B cell (primary cell): ENCODE measurements at regions of chr3 and their contacts with region 1.

Region 1: DNA sequence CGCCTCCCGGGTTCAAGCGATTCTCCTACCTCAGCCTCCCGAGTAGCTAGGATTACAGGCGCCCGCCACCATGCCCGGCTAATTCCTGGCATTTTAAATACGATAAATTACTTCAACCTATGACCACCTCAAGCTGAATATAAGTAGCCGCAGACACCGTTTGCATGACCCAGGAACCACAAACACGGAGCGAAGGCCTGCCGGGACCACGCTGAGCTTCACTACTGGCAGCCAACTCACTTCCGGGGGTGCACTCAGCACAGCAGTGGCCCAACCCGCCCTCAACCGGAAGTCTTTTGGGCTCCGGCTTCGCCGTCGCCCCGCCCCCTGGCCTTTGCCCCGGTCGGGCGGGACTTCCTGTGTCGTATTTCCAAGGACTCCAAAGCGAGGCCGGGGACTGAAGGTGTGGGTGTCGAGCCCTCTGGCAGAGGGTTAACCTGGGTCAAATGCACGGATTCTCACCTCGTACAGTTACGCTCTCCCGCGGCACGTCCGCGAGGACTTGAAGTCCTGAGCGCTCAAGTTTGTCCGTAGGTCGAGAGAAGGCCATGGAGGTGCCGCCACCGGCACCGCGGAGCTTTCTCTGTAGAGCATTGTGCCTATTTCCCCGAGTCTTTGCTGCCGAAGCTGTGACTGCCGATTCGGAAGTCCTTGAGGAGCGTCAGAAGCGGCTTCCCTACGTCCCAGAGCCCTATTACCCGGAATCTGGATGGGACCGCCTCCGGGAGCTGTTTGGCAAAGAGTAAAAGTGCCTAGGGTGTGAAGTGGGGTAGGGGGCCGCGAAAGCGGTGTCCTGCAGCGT is at the start of gene TIMMDC1:
- DNase-seq: peak; percentile 97
- ATAC-seq: peak; percentile 99
- H3K4me3 ChIP-seq: peak within 1 kb of the TSS; percentile 86 to 98 (median 94)
- H3K4me3 Mint-ChIP-seq: peak within 1 kb of the TSS; percentile 100
- H3K27ac ChIP-seq: peak within 1 kb of the TSS; percentile 82 to 91
- H3K27ac Mint-ChIP-seq: peak within 1 kb of the TSS; percentile 98
- H3K4me1 ChIP-seq: peaks cover 16 to 18% of the 10 kb centered on the region in 2 donors
- H3K4me1 Mint-ChIP-seq: peaks cover 26% of the 10 kb centered on the region
- H3K27me3 ChIP-seq: no peaks in the 10 kb centered on the region
- H3K27me3 Mint-ChIP-seq: no peaks in the 10 kb centered on the region
- CTCF ChIP-seq: no peak
- total RNA-seq, gene TIMMDC1: 58.5 and 70.9 TPM in 2 replicates

Region 2: GRCh38 chr3:119145500-119146191 is 352.7 kb before region 1 on chr3 and contains the start of gene TEX55:
- CTCF ChIA-PET with region 1: no interaction called
- POLR2A ChIA-PET with region 1: no interaction called
- intact Hi-C with region 1: no loop called
- DNase-seq: peak; percentile 18
- ATAC-seq: no peak
- H3K4me3 ChIP-seq: no peak within 1 kb of the TSS
- H3K4me3 Mint-ChIP-seq: no peak within 1 kb of the TSS
- H3K27ac ChIP-seq: no peak within 1 kb of the TSS
- H3K27ac Mint-ChIP-seq: no peak within 1 kb of the TSS
- H3K4me1 ChIP-seq: no peaks in the 10 kb centered on the region
- H3K4me1 Mint-ChIP-seq: no peaks in the 10 kb centered on the region
- H3K27me3 ChIP-seq: no peaks in the 10 kb centered on the region
- H3K27me3 Mint-ChIP-seq: no peaks in the 10 kb centered on the region
- CTCF ChIP-seq: peak; percentile 35
- total RNA-seq, gene TEX55: not detected in 2 replicates

Region 3: DNA sequence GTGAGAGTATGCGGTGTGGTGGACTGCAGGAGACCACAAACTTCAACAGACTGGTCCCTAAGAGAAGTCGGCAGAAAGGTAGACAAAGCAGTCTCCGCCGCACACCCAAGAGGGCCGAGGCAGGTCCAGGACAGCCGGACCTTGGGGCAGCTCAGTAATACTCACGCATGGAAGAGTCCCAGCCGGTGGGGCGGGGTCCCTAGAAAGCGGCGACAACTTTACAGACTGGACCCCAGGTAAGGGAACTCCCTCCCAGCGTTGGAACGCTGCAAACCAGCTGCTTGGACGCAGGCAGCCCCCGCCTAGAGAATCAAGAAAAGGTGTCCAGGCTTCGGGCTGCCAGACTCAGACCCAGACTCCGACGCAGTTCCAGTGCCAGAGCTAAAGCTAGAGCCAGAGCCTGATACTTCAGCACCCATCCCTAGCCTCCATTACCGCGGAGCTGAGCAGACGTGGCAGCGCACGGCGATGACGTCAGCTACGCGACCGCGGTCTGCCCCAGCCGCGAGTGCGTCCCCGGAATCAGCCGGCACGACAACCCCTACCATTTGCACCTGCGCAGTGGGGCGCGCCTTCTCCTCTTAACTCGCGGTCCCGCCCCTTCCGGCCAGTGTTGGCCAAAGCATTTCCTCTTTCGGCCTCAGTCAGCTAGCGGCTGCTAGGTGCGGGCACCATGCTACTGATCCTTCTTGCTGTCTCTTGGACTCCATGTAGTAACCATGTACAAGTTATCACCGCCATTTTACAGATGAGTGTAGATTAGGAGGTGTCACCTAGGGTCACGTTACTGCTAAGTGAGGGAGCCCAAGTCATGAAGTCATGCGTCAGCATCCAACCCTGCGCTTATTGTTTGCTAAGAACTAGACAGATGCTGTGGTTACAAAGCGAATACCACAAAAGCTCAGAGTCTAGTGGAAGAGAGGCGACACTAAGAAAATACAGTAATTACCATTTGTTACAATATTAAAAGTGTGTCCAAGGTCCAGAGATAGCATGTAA is 34.9 kb before region 1 on chr3 and contains the start of gene TMEM39A:
- CTCF ChIA-PET with region 1: interaction called, 16 read pairs
- POLR2A ChIA-PET with region 1: interaction called, 14 read pairs
- intact Hi-C with region 1: loop called (anchors 1 kb)
- DNase-seq: peak; percentile 99
- ATAC-seq: peak; percentile 87
- H3K4me3 ChIP-seq: peak within 1 kb of the TSS; percentile 76 to 99 (median 85)
- H3K4me3 Mint-ChIP-seq: peak within 1 kb of the TSS; percentile 96
- H3K27ac ChIP-seq: peak within 1 kb of the TSS; percentile 68 to 88
- H3K27ac Mint-ChIP-seq: peak within 1 kb of the TSS; percentile 99
- H3K4me1 ChIP-seq: peaks cover 24 to 25% of the 10 kb centered on the region in 2 donors
- H3K4me1 Mint-ChIP-seq: peaks cover 37% of the 10 kb centered on the region
- H3K27me3 ChIP-seq: no peaks in the 10 kb centered on the region
- H3K27me3 Mint-ChIP-seq: no peaks in the 10 kb centered on the region
- CTCF ChIP-seq: no peak
- total RNA-seq, gene TMEM39A: 39.9 and 50.3 TPM in 2 replicates

Region 4: DNA sequence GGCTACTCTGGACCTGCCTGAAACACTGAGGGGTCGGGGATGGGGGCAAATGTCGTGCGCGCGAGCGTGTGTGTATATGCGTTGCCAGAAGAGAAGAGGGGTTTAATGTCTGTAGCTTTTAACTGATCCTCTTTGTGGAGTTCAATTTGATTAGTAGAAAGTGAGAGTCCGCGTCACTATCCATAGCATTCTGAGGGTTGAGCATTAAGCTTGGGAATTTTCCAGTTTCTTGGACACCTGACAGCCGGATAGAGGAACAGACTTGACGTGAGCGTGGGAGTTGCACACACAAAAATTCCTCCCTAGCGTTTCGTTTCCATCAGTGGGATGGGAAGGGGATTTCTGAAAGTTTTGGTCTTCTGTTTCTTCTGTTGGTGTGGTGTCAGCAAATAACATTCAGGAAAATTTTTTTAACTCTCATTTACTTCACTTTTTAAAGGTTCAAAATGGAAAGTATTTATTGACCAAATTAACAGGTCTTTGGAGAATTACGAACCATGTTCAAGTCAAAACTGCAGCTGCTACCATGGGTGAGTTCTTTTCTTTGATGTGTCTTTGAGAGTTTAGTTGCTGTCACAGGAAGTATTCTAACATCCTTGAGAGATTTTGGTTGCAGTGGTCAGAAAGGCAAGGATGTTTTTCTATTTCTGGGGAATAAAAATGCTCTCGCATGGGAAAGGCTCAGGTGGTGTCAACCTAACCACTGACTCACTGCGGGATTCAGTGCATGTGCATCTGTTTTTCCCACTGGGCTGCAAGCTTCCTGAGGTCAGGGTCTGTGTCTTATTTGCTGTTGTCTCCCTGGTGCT is 28.8 kb before region 1 on chr3:
- CTCF ChIA-PET with region 1: interaction called, 5 read pairs
- POLR2A ChIA-PET with region 1: interaction called, 14 read pairs
- intact Hi-C with region 1: loop called (anchors 1 kb)
- DNase-seq: no peak
- ATAC-seq: peak; percentile 39
- H3K4me3 ChIP-seq: peak overlapping the region; percentile 82 to 98 (median 94)
- H3K4me3 Mint-ChIP-seq: peak overlapping the region; percentile 98
- H3K27ac ChIP-seq: peak overlapping the region; percentile 16 to 74
- H3K27ac Mint-ChIP-seq: peak overlapping the region; percentile 85
- H3K4me1 ChIP-seq: peaks cover 16 to 23% of the 10 kb centered on the region in 2 donors
- H3K4me1 Mint-ChIP-seq: peaks cover 29% of the 10 kb centered on the region
- H3K27me3 ChIP-seq: no peaks in the 10 kb centered on the region
- H3K27me3 Mint-ChIP-seq: no peaks in the 10 kb centered on the region
- CTCF ChIP-seq: no peak

Region 5: GRCh38 chr3:119548341-119548740 is 50.0 kb after region 1 on chr3:
- CTCF ChIA-PET with region 1: no interaction called
- POLR2A ChIA-PET with region 1: no interaction called
- intact Hi-C with region 1: no loop called
- DNase-seq: no peak
- ATAC-seq: no peak
- H3K4me3 ChIP-seq: no peak overlapping the region
- H3K4me3 Mint-ChIP-seq: no peak overlapping the region
- H3K27ac ChIP-seq: no peak overlapping the region
- H3K27ac Mint-ChIP-seq: peak overlapping the region; percentile 54
- H3K4me1 ChIP-seq: peaks cover 0 to 24% of the 10 kb centered on the region in 2 donors
- H3K4me1 Mint-ChIP-seq: peaks cover 59% of the 10 kb centered on the region
- H3K27me3 ChIP-seq: no peaks in the 10 kb centered on the region
- H3K27me3 Mint-ChIP-seq: no peaks in the 10 kb centered on the region
- CTCF ChIP-seq: no peak

Region 6: GRCh38 chr3:119579366-119580165 is 81.2 kb after region 1 on chr3 and contains the start of gene ADPRH:
- CTCF ChIA-PET with region 1: no interaction called
- POLR2A ChIA-PET with region 1: interaction called, 3 read pairs
- intact Hi-C with region 1: loop called (anchors 1 kb)
- DNase-seq: peak; percentile 81
- ATAC-seq: peak; percentile 76
- H3K4me3 ChIP-seq: peak within 1 kb of the TSS; percentile 64 to 94 (median 78)
- H3K4me3 Mint-ChIP-seq: peak within 1 kb of the TSS; percentile 99
- H3K27ac ChIP-seq: peak within 1 kb of the TSS; percentile 94 to 98
- H3K27ac Mint-ChIP-seq: peak within 1 kb of the TSS; percentile 100
- H3K4me1 ChIP-seq: peaks cover 12 to 19% of the 10 kb centered on the region in 2 donors
- H3K4me1 Mint-ChIP-seq: peaks cover 30% of the 10 kb centered on the region
- H3K27me3 ChIP-seq: no peaks in the 10 kb centered on the region
- H3K27me3 Mint-ChIP-seq: no peaks in the 10 kb centered on the region
- CTCF ChIP-seq: no peak
- total RNA-seq, gene ADPRH: 18.8 and 24.5 TPM in 2 replicates